ENCODE measurements at regions of chr16 and their contacts with region 1.

Region 1: DNA sequence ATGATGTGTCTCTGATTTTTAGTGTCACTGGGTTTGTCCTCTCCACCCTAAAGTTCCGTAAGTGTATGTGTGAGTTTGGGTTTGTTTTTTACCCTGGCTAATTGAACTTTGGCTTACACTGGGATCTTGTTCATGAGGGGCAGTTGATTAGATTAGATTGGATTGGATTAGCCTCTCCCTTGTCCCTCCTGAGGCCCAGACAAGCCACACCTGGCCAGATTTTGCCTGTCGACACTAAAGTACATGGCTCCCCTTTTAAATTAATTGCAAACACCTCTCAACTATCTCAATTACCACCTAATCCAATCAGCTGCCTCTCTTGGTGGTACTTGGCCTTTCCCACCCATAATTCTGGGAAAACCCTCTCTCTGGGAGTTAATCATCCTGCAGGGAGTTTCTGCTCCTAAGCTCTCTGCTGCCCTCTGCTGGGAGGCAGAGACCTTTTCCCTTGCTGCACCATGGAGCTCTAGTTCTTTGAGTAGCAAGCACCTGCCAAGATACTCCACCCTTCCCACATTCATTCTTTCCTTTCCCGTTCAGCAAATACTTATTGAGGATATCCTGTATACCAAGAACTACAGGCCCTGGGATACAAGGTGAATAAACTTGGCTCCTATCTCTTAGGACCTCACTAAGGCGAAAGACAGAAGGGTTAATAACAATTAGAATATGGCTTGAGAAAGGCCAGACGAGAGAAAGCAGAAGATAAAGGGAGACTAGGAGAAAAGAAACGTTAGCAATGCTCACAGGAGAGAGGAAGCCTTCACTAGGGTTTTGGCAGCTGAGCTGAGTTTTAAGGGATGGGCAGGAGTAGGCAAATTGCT is 60.0 kb upstream of the MPHOSPH6 start:
- DNase-seq: peak; percentile 54 to 72
- H3K4me3 ChIP-seq: no peak overlapping the region
- H3K27ac ChIP-seq: no peak overlapping the region
- H3K4me1 ChIP-seq: peaks cover 0 to 3% of the 10 kb centered on the region in 2 donors
- H3K27me3 ChIP-seq: no peaks in the 10 kb centered on the region
- CTCF ChIP-seq: peak; percentile 83 to 91 (median 86)
- POLR2A ChIP-seq: no peak

Region 2: DNA sequence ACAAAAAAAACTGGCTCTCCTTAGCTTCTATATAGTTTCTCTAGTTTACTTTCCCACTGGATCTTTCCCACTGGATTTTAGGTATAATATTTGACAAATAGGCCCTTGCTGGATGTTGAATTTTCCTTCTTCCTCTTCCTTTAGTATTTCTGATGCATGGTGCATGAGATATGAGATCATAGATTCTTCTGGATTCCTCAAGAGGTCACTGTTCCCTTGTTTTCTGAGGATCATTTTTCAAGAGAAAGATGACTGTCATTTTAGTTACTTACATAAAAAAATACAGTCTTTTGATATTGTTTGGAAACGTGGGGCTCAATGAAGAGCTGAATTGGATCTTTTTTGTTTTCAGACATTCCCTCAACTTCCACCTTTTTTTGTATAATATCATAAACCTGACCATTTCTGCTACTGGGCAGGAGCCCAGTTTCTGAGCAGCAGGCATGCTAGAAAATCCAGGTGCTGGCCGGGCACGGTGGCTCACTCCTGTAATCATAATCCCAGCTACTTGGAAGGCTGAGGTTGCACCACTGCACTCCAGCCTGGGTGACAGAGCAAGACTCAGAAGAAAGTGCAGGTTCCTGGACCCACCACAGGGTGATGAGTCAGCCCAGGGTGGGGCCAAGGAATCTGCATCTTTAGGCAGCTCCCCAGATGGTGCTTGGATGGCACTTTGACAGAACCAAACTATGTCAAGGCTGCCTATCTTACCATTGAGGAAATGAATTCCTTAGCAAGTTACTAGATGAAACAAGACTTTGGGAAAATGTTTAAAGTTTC is 289.0 kb before region 1 on chr16:
- intact Hi-C with region 1: loop called (anchors 5 kb)
- DNase-seq: no peak
- H3K4me3 ChIP-seq: no peak overlapping the region
- H3K27ac ChIP-seq: no peak overlapping the region
- H3K4me1 ChIP-seq: no peaks in the 10 kb centered on the region
- H3K27me3 ChIP-seq: no peaks in the 10 kb centered on the region
- CTCF ChIP-seq: peak; percentile 24 to 35 (median 28)
- POLR2A ChIP-seq: no peak

Region 3: GRCh38 chr16:82027629-82028064 is 202.4 kb before region 1 on chr16:
- intact Hi-C with region 1: loop called (anchors 10 kb)
- DNase-seq: no peak
- H3K4me3 ChIP-seq: no peak overlapping the region
- H3K27ac ChIP-seq: no peak overlapping the region
- H3K4me1 ChIP-seq: no peaks in the 10 kb centered on the region
- H3K27me3 ChIP-seq: no peaks in the 10 kb centered on the region
- CTCF ChIP-seq: no peak
- POLR2A ChIP-seq: no peak